GM18951 (cell line): ENCODE measurements at regions of chr10 and their contacts with region 1.

Region 1: GRCh38 chr10:118712930-118713634 is 41.7 kb downstream of the CACUL1 start:
- POLR2A ChIP-seq: no peak

Region 2: DNA sequence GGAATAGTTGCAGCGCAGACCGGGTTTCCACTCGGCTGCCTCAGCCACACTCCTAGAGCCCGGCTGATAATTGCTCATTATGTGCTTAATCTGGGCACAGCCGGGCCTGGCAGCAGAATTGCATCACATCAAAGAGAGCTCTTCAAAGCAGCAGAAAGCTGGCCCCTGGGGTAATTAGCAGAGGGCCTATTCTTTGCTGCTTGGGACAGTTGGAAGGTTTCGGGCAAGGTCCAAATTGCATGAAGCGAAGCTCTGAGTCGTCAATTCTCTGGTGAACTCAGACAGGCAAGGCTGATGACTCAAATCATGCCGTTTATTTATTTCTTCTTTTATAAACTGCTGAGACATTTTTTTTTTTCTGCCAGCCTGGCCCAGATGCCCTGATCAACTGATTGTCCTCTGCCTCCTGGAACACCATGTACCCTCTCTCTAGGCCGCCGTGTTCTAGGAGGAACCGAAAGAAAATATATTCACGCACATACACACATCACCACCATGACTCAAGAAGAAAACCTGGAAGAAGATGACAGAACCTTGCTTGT is 908.5 kb before region 1 on chr10:
- in situ Hi-C with region 1: no loop called
- POLR2A ChIP-seq: no peak

Region 3: DNA sequence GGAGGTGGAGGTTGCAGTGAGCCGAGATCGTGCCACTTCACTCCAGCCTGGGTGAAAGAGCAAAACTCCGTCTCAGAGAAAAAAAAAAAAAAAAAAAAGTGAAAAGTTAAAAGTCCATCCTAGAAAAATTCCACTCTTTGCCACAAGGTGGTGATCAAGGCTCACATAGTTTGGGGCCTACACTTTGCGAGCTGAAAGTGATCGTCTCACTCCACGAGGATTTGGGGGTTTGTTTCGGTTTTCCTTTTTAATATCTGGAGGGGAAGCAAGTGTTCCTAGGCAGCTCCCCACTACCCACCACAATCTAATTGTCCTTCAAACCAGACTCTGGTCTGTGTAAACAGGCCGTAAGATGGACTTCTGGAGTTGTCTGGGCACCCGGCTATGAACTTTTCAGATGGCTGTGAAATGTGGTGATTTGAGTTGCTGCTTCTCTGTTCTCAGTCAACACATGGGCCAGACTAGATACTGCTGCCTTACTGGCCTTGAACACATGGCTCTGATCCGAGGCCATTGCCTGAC is 144.7 kb before region 1 on chr10:
- in situ Hi-C with region 1: loop called (anchors 10 kb)
- POLR2A ChIP-seq: no peak

Region 4: GRCh38 chr10:118783776-118784545 is 70.9 kb after region 1 on chr10:
- in situ Hi-C with region 1: no loop called
- POLR2A ChIP-seq: no peak

Region 5: GRCh38 chr10:118798231-118798662 is 85.2 kb after region 1 on chr10:
- in situ Hi-C with region 1: no loop called
- POLR2A ChIP-seq: no peak